Left cardiac atrium (tissue), 4 donors: ENCODE measurements at regions of chr9 and their contacts with region 1.

Region 1: GRCh38 chr9:1173206-1173605 is 123.0 kb downstream of the DMRT2 start:
- DNase-seq: no peak
- ATAC-seq: no peak

Region 2: DNA sequence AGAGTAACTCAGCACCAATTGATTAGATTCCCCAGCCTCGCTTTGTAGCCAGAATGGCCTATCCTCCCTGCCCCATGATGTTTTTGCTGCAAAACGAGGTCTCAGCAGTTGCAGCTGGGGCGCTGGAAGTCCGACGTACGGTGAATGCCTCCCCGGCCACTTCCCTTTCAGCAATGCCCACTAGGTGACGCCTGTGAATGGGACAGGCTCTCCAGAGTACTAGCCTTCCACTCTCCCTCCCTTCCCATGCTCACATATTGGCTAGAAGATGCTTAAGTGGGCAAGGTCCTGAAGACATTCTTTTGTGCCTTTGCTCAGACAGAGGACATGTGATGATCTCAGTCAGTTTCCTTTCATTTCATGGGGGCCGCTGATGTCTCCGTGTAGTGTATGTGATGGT is 72.3 kb before region 1 on chr9:
- intact Hi-C with region 1: loop called in 1 of 2 experiments (anchors 10 kb)
- DNase-seq: peak; percentile 45
- ATAC-seq: peak; percentile 68 to 81

Region 3: DNA sequence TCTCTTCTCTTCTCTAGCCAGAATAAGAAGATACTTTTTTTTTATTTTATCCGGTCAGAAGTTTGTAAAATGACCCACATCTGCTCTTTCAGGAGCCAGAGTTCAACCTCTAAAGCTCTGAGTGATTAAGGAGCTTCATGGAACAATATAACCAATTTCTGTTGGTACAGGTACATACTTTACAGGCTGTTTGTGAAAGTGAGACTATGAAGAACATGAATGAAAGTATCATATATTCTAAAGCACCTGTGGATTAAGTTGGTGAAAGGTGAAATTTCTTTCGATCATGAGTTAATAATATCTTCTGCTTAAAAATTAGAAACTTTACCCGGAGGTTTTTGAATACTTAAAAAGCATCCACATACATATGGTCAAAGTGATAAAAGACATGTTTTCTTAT is 57.8 kb before region 1 on chr9:
- intact Hi-C with region 1: loop called in 1 of 2 experiments (anchors 10 kb)
- DNase-seq: no peak
- ATAC-seq: no peak